Ovary (tissue), 10 donors: ENCODE measurements at regions of chr13 and their contacts with region 1.

Region 1: DNA sequence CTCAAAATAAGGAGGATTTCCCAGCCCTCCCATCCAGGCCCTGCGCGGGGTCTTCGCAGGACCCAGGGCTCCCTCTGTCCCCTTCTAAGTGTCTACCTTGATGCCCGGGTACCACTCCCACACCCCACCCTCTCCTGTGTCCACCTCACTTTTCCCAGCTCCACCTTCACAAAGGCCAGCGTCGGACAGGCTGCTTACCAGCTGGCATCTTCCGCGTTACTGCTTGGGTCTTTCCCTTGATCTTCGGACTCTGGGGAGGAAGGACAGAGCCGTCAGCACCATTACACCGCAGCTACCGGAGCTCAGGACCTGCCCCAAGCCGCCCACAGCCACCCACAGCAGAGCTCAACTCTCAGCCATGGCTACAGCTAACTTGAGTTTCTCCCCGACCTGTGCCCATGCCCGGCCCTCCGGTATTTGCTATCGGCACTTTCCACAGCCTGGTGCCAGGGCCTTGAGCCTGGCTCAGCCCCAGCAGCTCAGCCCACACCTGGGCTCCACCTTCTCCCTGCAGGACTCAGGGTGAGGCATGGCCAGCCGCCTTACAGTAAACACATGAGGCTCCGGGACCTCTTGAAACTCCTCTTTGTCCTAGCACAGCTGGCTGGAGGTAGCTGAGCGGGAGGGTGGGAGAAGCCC is 3.8 kb downstream of the C13orf46 start:
- DNase-seq: peak in 2 of 5 donors; percentile 9 to 29
- H3K4me3 ChIP-seq: no peak overlapping the region
- H3K27ac ChIP-seq: no peak overlapping the region
- H3K4me1 ChIP-seq: no peaks in the 10 kb centered on the region
- H3K27me3 ChIP-seq: no peaks in the 10 kb centered on the region
- CTCF ChIP-seq: no peak
- EP300 ChIP-seq: no peak
- POLR2A ChIP-seq: no peak

Region 2: DNA sequence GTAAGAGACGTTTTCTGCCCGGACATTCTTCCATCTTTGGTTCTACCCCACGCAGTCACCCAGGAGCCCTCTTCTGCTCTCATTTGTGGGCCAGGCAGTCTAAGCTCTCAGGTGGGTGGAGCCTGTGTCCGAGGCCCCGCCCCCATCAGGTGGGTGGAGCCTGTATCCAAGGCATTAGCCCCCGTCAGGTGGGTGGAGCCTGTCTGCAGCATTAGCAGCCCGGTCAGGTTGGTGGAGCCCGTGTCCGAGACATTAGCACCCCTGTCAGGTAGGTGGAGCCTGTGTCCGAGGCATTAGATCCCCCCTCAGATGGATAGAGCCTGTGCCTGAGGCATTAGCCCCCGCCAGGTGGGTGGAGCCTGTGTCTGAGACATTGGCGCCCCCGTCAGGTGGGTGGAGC is 49.3 kb after region 1 on chr13:
- intact Hi-C with region 1: loop called in 1 of 4 experiments (anchors 5 kb)
- DNase-seq: no peak
- H3K4me3 ChIP-seq: no peak overlapping the region
- H3K27ac ChIP-seq: no peak overlapping the region
- H3K4me1 ChIP-seq: no peaks in the 10 kb centered on the region
- H3K27me3 ChIP-seq: no peaks in the 10 kb centered on the region
- CTCF ChIP-seq: no peak
- EP300 ChIP-seq: no peak
- POLR2A ChIP-seq: no peak

Region 3: GRCh38 chr13:114115191-114115671 is 145.1 kb after region 1 on chr13:
- intact Hi-C with region 1: no loop called
- DNase-seq: peak in 3 of 5 donors; percentile 17 to 33 (median 23)
- H3K4me3 ChIP-seq: no peak overlapping the region
- H3K27ac ChIP-seq: no peak overlapping the region
- H3K4me1 ChIP-seq: peaks cover 2% of the 10 kb centered on the region
- H3K27me3 ChIP-seq: no peaks in the 10 kb centered on the region
- CTCF ChIP-seq: no peak
- EP300 ChIP-seq: no peak
- POLR2A ChIP-seq: no peak

Region 4: DNA sequence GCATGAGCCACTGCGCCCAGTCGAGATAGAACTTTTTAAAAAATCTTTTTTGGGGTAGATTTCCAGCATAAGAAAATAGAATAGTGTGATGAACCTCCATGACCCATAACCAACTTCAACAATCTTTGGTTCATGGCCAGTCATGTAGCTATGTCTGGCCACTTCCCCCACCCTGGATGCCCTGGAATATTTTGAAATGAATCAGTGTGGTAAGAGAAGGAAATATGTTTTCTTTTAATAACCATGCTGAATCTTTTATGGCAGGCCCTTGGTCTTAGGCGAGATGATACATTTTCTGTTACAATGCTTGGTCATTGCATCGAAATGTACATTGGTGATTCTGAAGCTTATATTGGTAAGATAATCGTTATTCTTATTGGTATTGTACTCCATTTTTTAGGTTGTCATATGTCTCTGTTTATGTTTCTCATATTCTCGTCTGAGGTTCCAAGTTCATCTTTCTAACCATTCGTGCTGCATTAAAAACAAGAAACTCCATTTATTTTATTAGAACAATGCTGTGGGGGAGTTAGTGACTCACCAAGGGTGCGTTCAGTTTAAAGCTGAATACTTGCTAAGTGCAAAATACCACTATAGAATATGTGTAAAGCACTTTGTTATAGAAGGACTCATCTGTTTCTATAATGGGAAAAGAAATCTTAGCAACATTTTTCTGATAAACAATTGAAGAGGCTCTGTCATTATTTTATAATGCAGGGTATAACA is 295.0 kb after region 1 on chr13:
- intact Hi-C with region 1: no loop called
- DNase-seq: no peak
- H3K4me3 ChIP-seq: no peak overlapping the region
- H3K27ac ChIP-seq: no peak overlapping the region
- H3K4me1 ChIP-seq: no peaks in the 10 kb centered on the region
- H3K27me3 ChIP-seq: no peaks in the 10 kb centered on the region
- CTCF ChIP-seq: no peak
- EP300 ChIP-seq: no peak
- POLR2A ChIP-seq: no peak